ENCODE measurements at regions of chr10 and their contacts with region 1.

Region 1: DNA sequence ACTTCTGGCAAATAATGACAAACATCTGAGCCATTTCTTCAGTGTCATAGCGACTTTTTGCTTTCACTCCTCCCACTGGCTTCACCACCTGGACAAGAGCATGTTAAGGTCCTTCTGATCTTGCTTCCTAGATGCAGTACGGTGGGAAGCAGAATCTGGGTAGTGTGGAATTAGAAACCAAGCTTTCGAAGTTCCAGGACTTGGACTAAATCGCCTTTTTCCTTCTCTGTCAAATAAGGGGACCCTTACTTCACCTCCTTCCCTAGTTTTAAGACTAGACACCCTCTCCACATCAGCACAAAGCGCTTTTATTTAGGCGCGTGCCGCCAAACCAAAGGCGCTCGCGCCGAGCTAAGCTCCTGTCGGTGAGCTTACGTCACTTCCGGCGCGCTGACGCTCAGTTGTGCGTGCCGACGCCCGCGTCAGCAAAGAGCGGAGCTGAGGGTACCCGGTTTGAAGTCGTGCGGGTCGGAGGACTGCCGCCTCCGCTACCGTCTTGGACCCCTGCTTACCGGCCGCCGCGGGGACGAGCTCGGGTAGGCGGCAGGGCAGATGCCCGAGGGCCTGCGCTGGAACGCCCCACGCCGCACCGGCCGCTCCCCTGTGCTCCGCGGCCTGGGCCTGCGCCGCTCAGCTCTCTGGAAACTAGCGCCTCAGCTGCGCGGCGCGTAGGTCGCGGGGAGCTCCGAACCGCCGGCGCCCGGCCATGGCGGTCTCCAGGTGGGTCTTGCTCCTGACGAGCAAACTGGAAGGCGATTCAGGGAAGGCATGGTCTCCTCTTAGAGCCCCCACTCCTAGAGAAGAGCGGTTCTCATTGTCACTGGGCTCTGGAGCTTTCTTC is at the start of gene BTAF1:
- DNase-seq: peak; percentile 81 to 85
- ATAC-seq: peak; percentile 98 to 99
- H3K4me3 ChIP-seq: peak within 1 kb of the TSS; percentile 67 to 84 (median 77)
- H3K27ac ChIP-seq: peak within 1 kb of the TSS; percentile 90 to 96 (median 94)
- H3K4me1 ChIP-seq: peaks cover 21 to 31% of the 10 kb centered on the region in 2 donors
- H3K27me3 ChIP-seq: no peaks in the 10 kb centered on the region
- CTCF ChIP-seq: peak in 2 of 5 experiments; percentile 10 to 14
- POLR2A ChIP-seq: peak; percentile 91 to 92
- total RNA-seq, gene BTAF1: 10.5 to 23.7 (median 11.3) TPM

Region 2: DNA sequence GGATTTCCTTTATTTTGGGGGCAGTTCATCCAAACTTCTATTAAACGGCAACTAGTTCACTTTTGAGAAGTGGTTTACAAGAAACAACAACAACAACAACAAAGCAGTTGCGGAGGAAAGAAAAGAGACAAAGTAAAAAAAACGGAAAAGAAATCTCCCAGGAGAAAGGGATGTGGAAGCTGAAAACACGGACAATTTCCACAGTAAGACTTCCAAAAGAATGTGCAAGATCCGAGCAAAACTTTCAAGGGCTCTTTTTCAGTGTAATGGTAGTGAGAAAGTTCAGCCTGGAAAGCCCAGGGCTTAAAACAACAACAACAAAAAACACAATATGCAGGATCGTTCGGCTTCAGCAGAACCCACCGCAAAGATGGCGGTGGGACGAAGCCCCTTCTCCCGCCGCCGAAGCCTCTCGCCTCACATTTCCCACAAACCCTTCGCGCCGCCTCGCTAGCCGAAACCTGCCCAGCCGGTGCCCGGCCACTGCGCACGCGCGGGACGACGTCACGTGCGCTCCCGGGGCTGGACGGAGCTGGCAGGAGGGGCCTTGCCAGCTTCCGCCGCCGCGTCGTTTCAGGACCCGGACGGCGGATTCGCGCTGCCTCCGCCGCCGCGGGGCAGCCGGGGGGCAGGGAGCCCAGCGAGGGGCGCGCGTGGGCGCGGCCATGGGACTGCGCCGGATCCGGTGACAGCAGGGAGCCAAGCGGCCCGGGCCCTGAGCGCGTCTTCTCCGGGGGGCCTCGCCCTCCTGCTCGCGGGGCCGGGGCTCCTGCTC is 125.5 kb before region 1 on chr10 and contains the start of gene TNKS2:
- in situ Hi-C with region 1: no loop called
- intact Hi-C with region 1: loop called (anchors 2 kb)
- DNase-seq: peak; percentile 85 to 93
- ATAC-seq: peak; percentile 67 to 77
- H3K4me3 ChIP-seq: peak within 1 kb of the TSS; percentile 72 to 93 (median 84)
- H3K27ac ChIP-seq: peak within 1 kb of the TSS; percentile 95 to 97 (median 96)
- H3K4me1 ChIP-seq: peaks cover 41 to 50% of the 10 kb centered on the region in 2 donors
- H3K27me3 ChIP-seq: no peaks in the 10 kb centered on the region
- CTCF ChIP-seq: peak in 1 of 5 experiments; percentile 13
- POLR2A ChIP-seq: peak; percentile 95 to 96
- total RNA-seq, gene TNKS2: 26.2 to 40.3 (median 29.5) TPM

Region 3: GRCh38 chr10:91908337-91909116 is 15.1 kb before region 1 on chr10:
- in situ Hi-C with region 1: no loop called
- intact Hi-C with region 1: loop called (anchors 2 kb)
- DNase-seq: peak; percentile 33 to 67
- ATAC-seq: peak; percentile 94
- H3K4me3 ChIP-seq: peak overlapping the region; percentile 67 to 84 (median 72)
- H3K27ac ChIP-seq: peak overlapping the region; percentile 44 to 60 (median 56)
- H3K4me1 ChIP-seq: peaks cover 7 to 16% of the 10 kb centered on the region in 2 donors
- H3K27me3 ChIP-seq: no peaks in the 10 kb centered on the region
- CTCF ChIP-seq: peak in 2 of 5 experiments; percentile 26 to 44
- POLR2A ChIP-seq: no peak